Activated naive CD4-positive, alpha-beta T cell treated with anti-CD3 and anti-CD28 coated beads for 36 hours (primary cell): ENCODE measurements at regions of chr2 and their contacts with region 1.

Region 1: GRCh38 chr2:138501425-138502283 is at the start of gene SPOPL:
- DNase-seq: peak; percentile 86
- H3K4me3 Mint-ChIP-seq: peak within 1 kb of the TSS; percentile 96
- H3K27ac Mint-ChIP-seq: peak within 1 kb of the TSS; percentile 92
- H3K4me1 Mint-ChIP-seq: peaks cover 33% of the 10 kb centered on the region
- H3K27me3 Mint-ChIP-seq: no peaks in the 10 kb centered on the region
- total RNA-seq, gene SPOPL: 8.4 to 8.7 TPM

Region 2: DNA sequence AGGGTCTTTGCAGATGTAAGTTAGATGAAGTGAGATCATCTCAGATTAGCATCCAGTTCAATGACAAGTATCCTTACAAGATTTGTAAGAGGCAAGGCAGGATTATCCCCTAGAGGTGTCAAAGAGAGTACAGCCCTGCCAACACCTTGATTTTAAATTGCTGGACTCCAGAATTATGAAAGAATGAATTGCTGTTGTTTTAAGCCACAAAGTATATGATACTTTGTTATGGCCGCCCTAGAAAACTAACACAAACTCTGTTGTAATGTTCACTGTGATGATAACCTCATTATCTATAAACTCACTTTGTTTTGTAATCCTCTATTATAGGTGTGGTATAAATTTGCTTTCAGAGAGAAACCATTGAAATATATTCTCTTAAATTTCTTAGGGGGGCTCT is 249.1 kb before region 1 on chr2:
- CTCF ChIA-PET with region 1: no interaction called
- intact Hi-C with region 1: no loop called
- DNase-seq: no peak
- H3K4me3 Mint-ChIP-seq: no peak overlapping the region
- H3K27ac Mint-ChIP-seq: no peak overlapping the region
- H3K4me1 Mint-ChIP-seq: no peaks in the 10 kb centered on the region
- H3K27me3 Mint-ChIP-seq: no peaks in the 10 kb centered on the region

Region 3: GRCh38 chr2:138430181-138430580 is 71.5 kb before region 1 on chr2:
- CTCF ChIA-PET with region 1: interaction called, 3 read pairs
- intact Hi-C with region 1: loop called (anchors 1 kb)
- DNase-seq: no peak
- H3K4me3 Mint-ChIP-seq: no peak overlapping the region
- H3K27ac Mint-ChIP-seq: no peak overlapping the region
- H3K4me1 Mint-ChIP-seq: peaks cover 11% of the 10 kb centered on the region
- H3K27me3 Mint-ChIP-seq: peaks cover 7% of the 10 kb centered on the region

Region 4: DNA sequence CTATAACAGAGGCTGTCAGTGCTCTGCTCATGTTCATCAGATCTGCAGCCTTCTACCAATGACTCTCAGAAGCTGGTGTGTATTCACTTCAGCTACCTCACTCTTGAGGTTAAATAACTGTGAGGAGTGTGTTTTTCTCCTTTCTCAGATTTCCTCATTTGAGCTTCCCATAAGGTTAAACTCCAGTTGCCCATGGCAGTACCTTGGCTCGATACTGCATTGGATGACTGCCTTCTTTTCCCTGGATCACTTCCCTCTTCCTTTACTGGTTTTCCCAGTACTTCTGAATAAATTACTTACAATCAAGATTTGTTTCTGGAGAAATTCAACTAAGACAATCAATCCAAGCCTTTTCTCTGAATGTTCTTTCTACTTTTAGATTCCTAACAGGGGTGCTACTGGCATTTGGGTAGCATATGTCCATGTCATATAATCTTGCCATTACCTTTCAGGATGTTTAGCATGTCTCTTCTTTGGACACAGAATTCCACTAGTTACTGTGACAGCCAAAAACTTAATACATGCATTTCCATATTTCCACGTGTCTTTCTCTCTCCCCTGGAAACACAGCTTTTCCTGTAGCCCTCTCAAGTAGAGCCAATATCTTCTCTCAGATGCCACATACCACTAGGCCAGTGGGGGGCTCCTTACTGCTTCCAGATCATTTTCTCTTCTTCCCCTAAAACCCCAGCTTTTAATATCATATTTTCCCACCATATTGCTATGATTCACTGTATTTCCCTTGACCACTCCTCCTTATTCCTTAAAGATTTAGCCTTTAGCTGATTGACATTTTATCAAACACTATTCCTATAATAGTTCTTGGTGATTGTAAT is 15.1 kb before region 1 on chr2:
- CTCF ChIA-PET with region 1: no interaction called
- intact Hi-C with region 1: no loop called
- DNase-seq: no peak
- H3K4me3 Mint-ChIP-seq: no peak overlapping the region
- H3K27ac Mint-ChIP-seq: no peak overlapping the region
- H3K4me1 Mint-ChIP-seq: no peaks in the 10 kb centered on the region
- H3K27me3 Mint-ChIP-seq: no peaks in the 10 kb centered on the region

Region 5: DNA sequence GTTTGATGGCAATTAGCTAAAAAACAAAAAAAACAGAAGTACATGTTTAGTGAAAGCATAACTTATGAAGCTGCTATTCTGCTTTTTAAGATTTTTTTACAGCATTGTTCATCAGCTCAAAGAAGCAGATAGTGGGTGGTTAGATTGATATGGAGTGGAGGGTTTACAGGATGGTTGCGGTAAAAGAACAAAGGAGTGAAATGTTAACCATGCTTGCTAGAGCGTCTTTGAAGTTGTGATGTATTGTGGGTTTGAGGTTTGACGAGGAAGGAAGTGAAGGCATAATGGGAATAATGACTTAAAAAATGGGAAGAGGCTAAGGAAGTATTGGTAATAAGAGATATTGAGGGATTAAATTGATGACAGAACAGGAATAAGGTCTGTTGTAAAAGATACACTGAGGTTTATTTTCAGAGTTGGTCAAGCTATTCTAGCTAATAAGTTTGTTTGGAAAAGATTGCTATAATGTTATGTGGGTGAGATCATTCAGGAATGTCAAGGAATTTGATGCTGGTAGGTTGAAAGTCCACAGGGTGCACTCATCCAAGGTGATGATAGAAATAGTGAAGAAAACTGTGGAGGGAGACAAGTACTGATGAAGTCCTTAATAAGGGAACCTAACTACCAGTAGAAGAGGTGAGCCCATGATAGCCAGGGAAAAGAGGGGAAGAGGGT is 14.5 kb after region 1 on chr2:
- CTCF ChIA-PET with region 1: no interaction called
- intact Hi-C with region 1: loop called (anchors 1 kb)
- DNase-seq: no peak
- H3K4me3 Mint-ChIP-seq: no peak overlapping the region
- H3K27ac Mint-ChIP-seq: no peak overlapping the region
- H3K4me1 Mint-ChIP-seq: peaks cover 43% of the 10 kb centered on the region
- H3K27me3 Mint-ChIP-seq: peaks cover 3% of the 10 kb centered on the region